H1 (cell line): ENCODE measurements at regions of chr1 and their contacts with region 1.

Region 1: GRCh38 chr1:222455188-222455879 is 92.6 kb downstream of the HHIPL2 start:
- DNase-seq: peak; percentile 50 to 90
- H3K4me3 ChIP-seq: no peak overlapping the region
- H3K27ac ChIP-seq: no peak overlapping the region
- H3K4me1 ChIP-seq: no peaks in the 10 kb centered on the region; a peak in 2 of 7 replicates
- H3K27me3 ChIP-seq: no peaks in the 10 kb centered on the region
- CTCF ChIP-seq: peak; percentile 89 to 99 (median 94)
- EP300 ChIP-seq: no peak
- POLR2A ChIP-seq: no peak
- RAD21 ChIP-seq: peak; percentile 95 to 96

Region 2: DNA sequence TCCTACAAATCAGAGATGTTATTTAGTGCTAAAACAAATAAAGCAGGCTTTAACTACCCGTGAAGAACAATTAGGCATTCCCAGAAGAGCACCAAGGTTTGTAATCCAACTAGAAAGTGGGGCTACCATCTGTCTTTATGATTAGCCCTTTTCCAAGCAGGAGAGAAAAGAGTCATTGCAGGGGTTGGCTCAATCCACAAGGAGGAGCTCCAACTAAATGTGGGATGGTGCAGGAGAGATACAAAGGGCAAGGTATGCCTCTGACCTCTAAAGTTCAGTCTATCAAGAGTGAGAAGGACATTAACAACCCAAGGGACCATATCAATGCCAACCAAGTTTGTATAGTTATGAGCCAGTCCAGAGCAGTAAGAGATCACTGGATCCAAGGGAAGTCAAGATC is 330.7 kb before region 1 on chr1:
- CTCF ChIA-PET with region 1: interaction called, 60 read pairs
- POLR2A ChIA-PET with region 1: no interaction called
- DNase-seq: no peak
- H3K4me3 ChIP-seq: no peak overlapping the region
- H3K27ac ChIP-seq: no peak overlapping the region
- H3K4me1 ChIP-seq: no peaks in the 10 kb centered on the region
- H3K27me3 ChIP-seq: no peaks in the 10 kb centered on the region
- CTCF ChIP-seq: peak in 2 of 3 experiments; percentile 59 to 78; a peak in 3 of 4 replicates
- EP300 ChIP-seq: no peak
- POLR2A ChIP-seq: no peak
- RAD21 ChIP-seq: peak; percentile 74

Region 3: DNA sequence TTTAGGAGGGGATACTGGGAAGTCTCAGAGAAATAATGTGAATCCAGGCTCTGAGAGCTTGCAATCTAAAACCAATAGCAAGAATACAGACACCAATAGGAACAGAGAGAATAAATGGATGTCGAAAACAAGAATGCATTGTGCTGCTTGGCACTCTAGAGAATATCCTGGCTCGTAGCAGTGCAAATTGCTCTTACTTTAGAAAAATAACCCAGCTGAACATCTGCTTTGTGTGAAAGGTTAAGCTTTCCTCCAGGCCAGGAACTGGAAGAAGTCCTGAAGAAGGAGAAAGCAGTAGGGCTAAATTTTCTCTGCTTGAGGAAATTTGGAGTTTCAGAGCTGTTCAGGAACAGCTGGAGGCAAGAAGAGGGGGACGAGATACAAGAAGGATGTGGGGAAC is 289.7 kb before region 1 on chr1:
- CTCF ChIA-PET with region 1: interaction called, 20 read pairs
- POLR2A ChIA-PET with region 1: interaction called, 3 read pairs
- DNase-seq: no peak
- H3K4me3 ChIP-seq: no peak overlapping the region
- H3K27ac ChIP-seq: no peak overlapping the region
- H3K4me1 ChIP-seq: no peaks in the 10 kb centered on the region
- H3K27me3 ChIP-seq: no peaks in the 10 kb centered on the region
- CTCF ChIP-seq: no peak
- EP300 ChIP-seq: no peak
- POLR2A ChIP-seq: no peak
- RAD21 ChIP-seq: no peak

Region 4: GRCh38 chr1:222441066-222441465 is 14.3 kb before region 1 on chr1:
- CTCF ChIA-PET with region 1: interaction called, 24 read pairs
- POLR2A ChIA-PET with region 1: no interaction called
- DNase-seq: no peak
- H3K4me3 ChIP-seq: no peak overlapping the region
- H3K27ac ChIP-seq: no peak overlapping the region
- H3K4me1 ChIP-seq: peaks cover 0 to 3% (median under 1%) of the 10 kb centered on the region in 4 experiments; a peak in 2 of 7 replicates
- H3K27me3 ChIP-seq: no peaks in the 10 kb centered on the region
- CTCF ChIP-seq: no peak
- EP300 ChIP-seq: no peak
- POLR2A ChIP-seq: no peak
- RAD21 ChIP-seq: no peak

Region 5: DNA sequence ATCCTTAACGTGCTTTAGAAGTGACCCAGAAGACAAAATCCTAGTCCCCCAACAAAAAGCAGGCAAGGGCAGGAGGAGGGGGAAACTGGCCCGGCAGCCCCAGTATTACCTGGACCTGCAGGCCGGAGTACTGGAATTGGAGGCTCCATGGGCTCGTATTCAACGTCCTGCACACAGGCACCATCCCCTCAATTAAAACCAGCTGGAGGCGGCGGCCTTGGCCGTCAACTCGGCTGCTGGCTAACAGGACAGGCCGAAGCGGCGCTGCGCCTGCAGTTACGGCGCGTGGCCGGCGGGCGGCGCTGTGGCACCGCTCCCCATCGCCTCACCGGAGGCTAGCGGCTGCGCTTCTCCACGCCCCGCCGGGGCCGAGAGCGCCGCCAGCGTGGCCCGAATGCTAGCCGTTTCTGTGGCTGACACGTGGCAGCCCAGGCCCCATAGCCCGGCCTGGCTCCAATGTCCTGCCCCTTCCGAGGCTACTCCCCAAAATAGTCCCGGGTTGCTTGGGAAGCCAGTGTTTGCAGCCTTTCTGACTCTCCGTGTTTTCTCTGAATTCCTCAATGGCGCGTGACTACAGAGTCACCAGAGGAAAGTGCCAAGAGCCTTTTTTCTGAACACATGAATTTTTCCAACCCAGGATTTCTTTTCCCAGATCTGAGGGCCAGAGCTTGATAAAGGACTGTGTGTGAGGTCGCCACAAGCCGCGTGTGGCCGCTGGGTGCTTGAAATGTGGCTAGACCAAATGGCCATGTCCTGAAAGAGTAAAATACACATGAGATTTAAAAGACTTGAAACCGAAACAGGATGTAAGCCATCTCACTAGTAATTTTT is 10.1 kb after region 1 on chr1:
- CTCF ChIA-PET with region 1: interaction called, 19 read pairs
- POLR2A ChIA-PET with region 1: interaction called, 6 read pairs
- DNase-seq: peak; percentile 88 to 96
- H3K4me3 ChIP-seq: peak overlapping the region; percentile 48 to 86 (median 67)
- H3K27ac ChIP-seq: 0 out of 2 replicates have a peak overlapping the region, but pooled peaks have one; percentile 50
- H3K4me1 ChIP-seq: no peaks in the 10 kb centered on the region
- H3K27me3 ChIP-seq: no peaks in the 10 kb centered on the region
- CTCF ChIP-seq: peak; percentile 97 to 99 (median 99)
- EP300 ChIP-seq: peak in 1 of 2 experiments; percentile 34; a peak in 1 of 3 replicates
- POLR2A ChIP-seq: peak; percentile 60 to 70; a peak in 2 of 3 replicates
- RAD21 ChIP-seq: peak; percentile 94 to 98

Region 6: GRCh38 chr1:222529916-222530315 is 74.6 kb after region 1 on chr1:
- CTCF ChIA-PET with region 1: no interaction called
- POLR2A ChIA-PET with region 1: no interaction called
- DNase-seq: no peak
- H3K4me3 ChIP-seq: no peak overlapping the region
- H3K27ac ChIP-seq: no peak overlapping the region
- H3K4me1 ChIP-seq: no peaks in the 10 kb centered on the region
- H3K27me3 ChIP-seq: peaks cover 0 to 1% (median 0%) of the 10 kb centered on the region in 4 experiments; a peak in 1 of 7 replicates
- CTCF ChIP-seq: no peak
- EP300 ChIP-seq: no peak
- POLR2A ChIP-seq: no peak
- RAD21 ChIP-seq: no peak